Posterior vena cava (tissue), 2 donors: ENCODE measurements at regions of chr21 and their contacts with region 1.

Region 1: GRCh38 chr21:35925497-35925896 is 134.8 kb downstream of the SETD4 start:
- DNase-seq: no peak

Region 2: DNA sequence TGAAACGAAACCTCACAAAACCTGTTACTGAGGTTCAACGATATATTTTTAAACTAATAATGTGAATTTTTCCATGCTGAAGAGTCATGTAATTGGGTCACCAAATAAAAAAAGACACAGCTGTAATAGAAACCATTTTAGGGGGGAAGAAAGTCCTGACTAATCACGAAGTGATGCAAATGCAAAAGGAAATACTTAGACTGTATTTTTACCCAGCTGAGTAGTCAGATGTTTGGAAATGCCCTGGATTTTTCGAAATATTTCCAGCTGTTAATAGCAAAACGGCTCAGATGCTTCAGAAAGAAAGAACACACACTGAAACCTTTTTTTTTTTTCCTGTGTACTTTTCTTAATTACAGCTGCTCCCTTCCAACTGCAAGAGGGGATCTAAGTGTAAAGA is 75.5 kb before region 1 on chr21:
- intact Hi-C with region 1: loop called in 1 of 2 experiments (anchors 10 kb)
- DNase-seq: no peak